ENCODE measurements at regions of chr15 and their contacts with region 1.

Region 1: DNA sequence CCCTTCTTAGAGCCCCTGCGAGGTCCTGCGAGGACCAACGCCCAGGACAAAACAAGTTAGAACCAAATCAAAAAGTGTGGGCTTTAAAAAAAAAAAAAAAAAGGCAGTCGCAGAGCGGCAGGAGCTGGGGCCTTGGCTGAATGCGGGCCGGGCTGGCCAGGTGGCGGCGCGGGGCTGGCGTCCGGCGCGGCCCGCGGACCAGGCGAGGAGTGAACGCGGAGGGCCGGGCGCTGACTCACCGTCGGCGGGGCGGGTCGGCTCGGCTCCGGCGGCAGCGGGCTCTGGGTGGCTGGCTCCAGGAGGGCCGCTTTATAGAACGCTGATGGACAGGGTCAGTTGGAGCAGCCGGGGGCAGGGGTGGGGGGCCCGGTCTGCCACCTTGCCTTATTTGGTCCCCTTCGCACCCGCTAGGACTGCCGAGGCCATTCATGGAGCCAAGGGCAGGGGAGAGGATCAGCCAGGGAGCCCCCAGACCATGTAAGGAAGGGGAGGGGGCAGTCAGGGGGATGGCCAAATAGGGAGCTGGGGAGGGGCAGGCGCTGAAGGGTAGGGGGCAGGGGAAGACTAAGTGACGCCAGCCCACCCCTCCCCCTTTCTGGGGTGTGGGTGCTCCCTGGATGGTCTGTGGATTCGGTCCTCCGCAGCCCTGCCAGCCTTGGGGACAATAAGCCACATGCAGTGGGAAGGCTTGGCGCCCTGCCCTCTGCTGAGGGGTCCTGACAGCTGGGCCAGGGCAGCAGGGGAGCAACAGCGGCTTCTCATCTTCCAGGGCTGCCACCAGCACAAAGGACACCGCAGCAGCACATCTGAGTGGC is at the start of gene ACTC1:
- DNase-seq: peak; percentile 71 to 74
- ATAC-seq: peak; percentile 41 to 76 (median 56)
- H3K4me3 ChIP-seq: peak within 1 kb of the TSS; percentile 19 to 65 (median 56)
- H3K27ac ChIP-seq: peak within 1 kb of the TSS; percentile 76 to 97 (median 93)
- H3K4me1 ChIP-seq: peaks cover 0 to 49% (median 20%) of the 10 kb centered on the region in 9 donors
- H3K27me3 ChIP-seq: peaks cover 0 to 71% (median 29%) of the 10 kb centered on the region in 7 donors
- CTCF ChIP-seq: no peak
- total RNA-seq, gene ACTC1: 8,176 to 17,444 (median 13,199) TPM

Region 2: GRCh38 chr15:34708422-34708821 is 87.1 kb before region 1 on chr15:
- intact Hi-C with region 1: loop called in 1 of 10 experiments (anchors 5 kb)
- DNase-seq: no peak
- ATAC-seq: peak in 7 of 8 donors; percentile 54 to 84 (median 79)
- H3K4me3 ChIP-seq: peak overlapping the region in 1 of 10 donors; percentile 3
- H3K27ac ChIP-seq: no peak overlapping the region
- H3K4me1 ChIP-seq: peaks cover 0 to 3% (median 0%) of the 10 kb centered on the region in 9 donors
- H3K27me3 ChIP-seq: no peaks in the 10 kb centered on the region
- CTCF ChIP-seq: peak; percentile 46 to 81 (median 67)

Region 3: GRCh38 chr15:34714476-34715121 is 80.9 kb before region 1 on chr15:
- intact Hi-C with region 1: loop called in 4 of 10 experiments (anchors 2 to 5 kb)
- DNase-seq: no peak
- ATAC-seq: no peak
- H3K4me3 ChIP-seq: no peak overlapping the region
- H3K27ac ChIP-seq: no peak overlapping the region
- H3K4me1 ChIP-seq: peaks cover 0 to 38% (median 7%) of the 10 kb centered on the region in 9 donors
- H3K27me3 ChIP-seq: no peaks in the 10 kb centered on the region
- CTCF ChIP-seq: no peak

Region 4: GRCh38 chr15:34721802-34722795 is 73.4 kb before region 1 on chr15:
- intact Hi-C with region 1: loop called in 2 of 10 experiments (anchors 2 to 5 kb)
- DNase-seq: peak; percentile 68 to 70
- ATAC-seq: peak; percentile 88 to 96 (median 94)
- H3K4me3 ChIP-seq: peak overlapping the region in 7 of 10 donors; percentile 9 to 40 (median 23)
- H3K27ac ChIP-seq: peak overlapping the region; percentile 66 to 87 (median 78)
- H3K4me1 ChIP-seq: peaks cover 0 to 68% (median 34%) of the 10 kb centered on the region in 9 donors
- H3K27me3 ChIP-seq: peaks cover 0 to 11% (median 0%) of the 10 kb centered on the region in 7 donors
- CTCF ChIP-seq: peak in 2 of 9 donors; percentile 8 to 27

Region 5: GRCh38 chr15:34847612-34848011 is 52.1 kb after region 1 on chr15:
- intact Hi-C with region 1: loop called in 2 of 10 experiments (anchors 5 kb)
- DNase-seq: no peak
- ATAC-seq: no peak
- H3K4me3 ChIP-seq: no peak overlapping the region
- H3K27ac ChIP-seq: no peak overlapping the region
- H3K4me1 ChIP-seq: peaks cover 0 to 4% (median 3%) of the 10 kb centered on the region in 9 donors
- H3K27me3 ChIP-seq: no peaks in the 10 kb centered on the region
- CTCF ChIP-seq: no peak

Region 6: GRCh38 chr15:34855397-34855796 is 59.9 kb after region 1 on chr15:
- intact Hi-C with region 1: loop called in 1 of 10 experiments (anchors 5 kb)
- DNase-seq: no peak
- ATAC-seq: peak in 6 of 8 donors; percentile 15 to 65 (median 36)
- H3K4me3 ChIP-seq: no peak overlapping the region
- H3K27ac ChIP-seq: peak overlapping the region in 7 of 10 donors; percentile 5 to 50 (median 19)
- H3K4me1 ChIP-seq: peaks cover 0 to 42% (median 28%) of the 10 kb centered on the region in 9 donors
- H3K27me3 ChIP-seq: no peaks in the 10 kb centered on the region
- CTCF ChIP-seq: no peak

Region 7: DNA sequence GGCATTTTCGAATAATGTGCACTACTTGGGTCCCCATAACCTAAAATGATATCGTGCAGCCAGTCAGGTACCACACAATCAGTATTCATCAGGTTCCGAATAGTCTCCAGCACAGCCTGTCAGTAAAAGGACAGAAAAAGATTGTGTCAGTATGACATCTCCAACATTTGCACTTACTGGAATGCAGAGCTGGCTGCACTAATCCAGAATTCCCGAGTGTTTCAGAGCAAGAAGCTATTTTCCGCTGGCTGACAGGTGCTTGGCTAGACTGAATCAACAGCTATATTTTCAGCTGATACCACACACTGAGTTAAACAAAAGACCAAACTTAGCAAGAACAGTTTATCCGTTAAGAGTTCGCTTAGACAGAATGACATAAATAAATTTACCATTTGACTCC is 105.3 kb after region 1 on chr15:
- intact Hi-C with region 1: loop called in 1 of 10 experiments (anchors 10 kb)
- DNase-seq: peak in 1 of 2 donors; percentile 19
- ATAC-seq: peak; percentile 34 to 93 (median 80)
- H3K4me3 ChIP-seq: no peak overlapping the region
- H3K27ac ChIP-seq: peak overlapping the region in 8 of 10 donors; percentile 22 to 71 (median 53)
- H3K4me1 ChIP-seq: peaks cover 0 to 7% (median 0%) of the 10 kb centered on the region in 9 donors
- H3K27me3 ChIP-seq: no peaks in the 10 kb centered on the region
- CTCF ChIP-seq: no peak

Measured in heart right ventricle (tissue), 16 donors.